GM13977 (cell line): ENCODE measurements at regions of chr3 and their contacts with region 1.

Region 1: DNA sequence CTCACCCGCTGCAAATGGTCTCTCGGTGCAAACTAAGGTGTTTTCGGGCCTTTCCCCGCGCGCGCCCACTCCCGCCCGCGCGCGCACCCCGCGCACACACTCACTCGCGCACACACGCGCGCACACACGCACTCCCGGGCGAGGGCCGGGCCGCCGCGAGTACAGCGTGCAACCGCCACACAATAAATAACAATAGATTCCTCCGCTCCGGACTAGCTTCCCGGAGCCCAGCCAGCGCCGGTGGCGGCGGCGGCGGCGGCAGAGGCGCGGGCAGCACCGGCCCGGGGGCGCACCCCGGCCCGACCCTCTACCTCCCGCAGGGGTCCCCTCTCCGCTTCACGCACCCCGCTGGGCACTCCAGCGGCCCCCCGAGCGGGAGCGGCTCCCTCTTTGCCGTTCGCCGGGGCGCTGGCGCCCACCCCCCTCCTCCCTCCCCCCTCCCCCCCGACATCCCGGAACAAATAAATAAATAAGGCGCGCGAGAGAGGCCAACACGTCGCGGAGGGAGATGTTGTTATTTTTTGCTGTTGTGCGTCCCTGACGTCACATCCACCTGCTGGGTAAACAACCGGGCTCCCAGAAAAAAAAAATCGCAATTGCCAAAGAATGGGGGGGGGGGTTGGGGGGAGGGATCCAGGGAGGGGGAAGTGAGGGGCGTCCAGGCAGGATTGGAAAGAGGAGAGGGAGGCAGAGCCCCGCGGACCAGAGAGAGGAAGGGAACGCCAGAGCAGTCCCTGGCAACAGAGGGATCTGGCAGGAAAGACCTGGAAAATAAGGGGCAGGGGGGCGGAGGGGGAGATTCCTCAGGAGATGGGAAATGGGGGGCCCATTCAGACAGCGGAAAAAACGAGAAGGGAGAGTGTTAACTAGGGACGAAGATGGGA is at the start of gene FOXP1:
- DNase-seq: peak; percentile 34
- CTCF ChIP-seq: no peak

Region 2: GRCh38 chr3:71006810-71007785 is 576.7 kb before region 1 on chr3:
- in situ Hi-C with region 1: loop called (anchors 25 kb)
- DNase-seq: peak; percentile 17
- CTCF ChIP-seq: peak; percentile 49